Brain microvascular endothelial cell (primary cell): ENCODE measurements at regions of chr19 and their contacts with region 1.

Region 1: GRCh38 chr19:13718733-13719132 is 45.6 kb upstream of the MRI1 start:
- DNase-seq: peak; percentile 28
- H3K4me3 ChIP-seq: no peak overlapping the region
- H3K27ac ChIP-seq: no peak overlapping the region
- H3K27me3 ChIP-seq: no peaks in the 10 kb centered on the region
- CTCF ChIP-seq: peak; percentile 52

Region 2: GRCh38 chr19:13277104-13277809 is 441.5 kb before region 1 on chr19:
- in situ Hi-C with region 1: loop called (anchors 25 kb)
- DNase-seq: peak; percentile 75
- H3K4me3 ChIP-seq: no peak overlapping the region
- H3K27ac ChIP-seq: no peak overlapping the region
- H3K27me3 ChIP-seq: no peaks in the 10 kb centered on the region
- CTCF ChIP-seq: peak; percentile 63

Region 3: GRCh38 chr19:13621413-13621812 is 97.3 kb before region 1 on chr19:
- in situ Hi-C with region 1: loop called (anchors 25 kb)
- DNase-seq: peak; percentile 96
- H3K4me3 ChIP-seq: no peak overlapping the region
- H3K27ac ChIP-seq: peak overlapping the region; percentile 55
- H3K27me3 ChIP-seq: peaks cover 8% of the 10 kb centered on the region
- CTCF ChIP-seq: no peak